ENCODE measurements at regions of chr6 and their contacts with region 1.

Region 1: DNA sequence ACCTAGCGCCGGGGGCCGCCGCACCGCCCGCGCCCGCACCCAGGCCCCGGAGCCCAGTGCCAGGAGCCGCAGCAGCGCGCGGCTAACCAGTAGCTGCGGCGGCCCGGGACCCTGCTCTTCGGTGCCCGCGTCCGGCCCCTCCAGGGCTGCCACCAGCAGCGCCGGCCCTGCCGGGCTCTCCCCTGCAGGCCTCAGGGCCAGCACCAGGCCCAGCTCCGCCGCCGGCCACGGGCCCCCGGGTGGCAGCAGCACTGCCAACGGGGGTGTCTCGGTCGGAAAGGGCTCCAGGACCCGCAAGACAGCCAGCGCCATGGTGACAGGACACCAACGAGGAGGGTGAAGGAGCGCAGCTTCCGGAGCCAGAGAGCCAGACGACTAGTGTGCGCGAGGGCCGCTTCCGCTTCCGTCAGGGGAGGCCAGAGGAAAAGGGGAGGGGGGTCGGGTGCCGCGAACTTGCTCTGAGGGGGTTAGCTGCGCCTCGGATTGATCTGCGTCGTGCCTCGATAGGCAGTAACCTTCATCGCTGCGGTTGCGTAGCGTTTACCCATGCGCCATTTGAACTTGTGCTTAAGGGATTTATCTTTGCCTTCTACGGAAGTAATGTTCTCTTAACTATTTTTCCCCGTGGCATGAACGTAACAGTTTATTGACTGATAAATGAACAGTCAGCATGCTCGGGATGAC is at the start of gene PEX6:
- DNase-seq: peak; percentile 94 to 98 (median 94)
- ATAC-seq: peak; percentile 91
- H3K4me3 ChIP-seq: peak within 1 kb of the TSS; percentile 95
- H3K27ac ChIP-seq: peak within 1 kb of the TSS; percentile 88
- H3K4me1 ChIP-seq: peaks cover 25 to 32% of the 10 kb centered on the region in 2 experiments; a peak in 4 of 5 replicates
- H3K27me3 ChIP-seq: no peaks in the 10 kb centered on the region
- CTCF ChIP-seq: peak in 1 of 3 experiments; percentile 3; a peak in 1 of 6 replicates
- EP300 ChIP-seq: peak; percentile 41; the same call in 1 of the 2 replicates
- POLR2A ChIP-seq: peak; percentile 97
- RAD21 ChIP-seq: no peak; a peak in 1 of 4 replicates
- polyA plus RNA-seq, gene PEX6: 0.17 to 0.77 TPM

Region 2: DNA sequence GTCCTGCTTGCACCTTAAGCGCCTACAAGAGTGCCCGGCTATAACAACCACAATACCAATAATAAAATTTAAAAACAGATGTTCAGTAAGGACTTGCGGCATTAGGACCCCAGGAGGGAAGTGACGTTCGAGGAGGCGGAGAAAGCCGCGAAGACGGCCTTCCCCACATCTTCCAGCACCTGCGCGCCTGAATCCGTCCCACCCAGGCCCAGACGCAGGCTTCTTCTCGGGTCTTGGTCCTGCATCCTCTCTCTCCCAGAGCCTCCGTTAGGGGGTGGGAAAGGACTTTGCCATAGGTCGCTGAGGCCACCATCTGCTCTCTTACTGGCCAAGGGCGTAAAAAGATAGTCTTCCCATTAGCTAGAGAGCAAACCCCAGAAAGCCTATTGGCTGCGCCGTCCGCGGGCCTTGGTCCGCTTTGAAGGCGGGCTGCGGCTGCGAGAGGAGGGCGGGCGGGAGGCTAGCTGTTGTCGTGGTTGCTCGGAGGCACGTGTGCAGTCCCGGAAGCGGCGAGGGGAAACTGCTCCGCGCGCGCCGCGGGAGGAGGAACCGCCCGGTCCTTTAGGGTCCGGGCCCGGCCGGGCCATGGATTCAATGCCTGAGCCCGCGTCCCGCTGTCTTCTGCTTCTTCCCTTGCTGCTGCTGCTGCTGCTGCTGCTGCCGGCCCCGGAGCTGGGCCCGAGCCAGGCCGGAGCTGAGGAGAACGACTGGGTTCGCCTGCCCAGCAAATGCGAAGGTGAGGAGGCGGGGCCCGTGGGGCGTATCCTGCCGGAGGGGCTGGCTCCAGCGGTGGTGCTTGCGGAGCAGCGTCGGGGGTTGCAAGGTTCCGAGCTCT is 49.8 kb before region 1 on chr6 and contains the start of gene CNPY3:
- CTCF ChIA-PET with region 1: no interaction called
- POLR2A ChIA-PET with region 1: interaction called, 13 read pairs
- in situ Hi-C with region 1: no loop called
- intact Hi-C with region 1: loop called (anchors 1 kb)
- DNase-seq: peak; percentile 96 to 99 (median 96)
- ATAC-seq: peak; percentile 95
- H3K4me3 ChIP-seq: peak within 1 kb of the TSS; percentile 76
- H3K27ac ChIP-seq: peak within 1 kb of the TSS; percentile 90
- H3K4me1 ChIP-seq: peaks cover 17 to 28% of the 10 kb centered on the region in 2 experiments; a peak in 4 of 5 replicates
- H3K27me3 ChIP-seq: no peaks in the 10 kb centered on the region
- CTCF ChIP-seq: peak in 2 of 3 experiments; percentile 15 to 36; a peak in 2 of 6 replicates
- EP300 ChIP-seq: peak; percentile 31; the same call in 1 of the 2 replicates
- POLR2A ChIP-seq: peak; percentile 88
- RAD21 ChIP-seq: peak; percentile 1 to 3; a peak in 1 of 4 replicates
- polyA plus RNA-seq, gene CNPY3: 2.4 to 3.9 TPM

Region 3: DNA sequence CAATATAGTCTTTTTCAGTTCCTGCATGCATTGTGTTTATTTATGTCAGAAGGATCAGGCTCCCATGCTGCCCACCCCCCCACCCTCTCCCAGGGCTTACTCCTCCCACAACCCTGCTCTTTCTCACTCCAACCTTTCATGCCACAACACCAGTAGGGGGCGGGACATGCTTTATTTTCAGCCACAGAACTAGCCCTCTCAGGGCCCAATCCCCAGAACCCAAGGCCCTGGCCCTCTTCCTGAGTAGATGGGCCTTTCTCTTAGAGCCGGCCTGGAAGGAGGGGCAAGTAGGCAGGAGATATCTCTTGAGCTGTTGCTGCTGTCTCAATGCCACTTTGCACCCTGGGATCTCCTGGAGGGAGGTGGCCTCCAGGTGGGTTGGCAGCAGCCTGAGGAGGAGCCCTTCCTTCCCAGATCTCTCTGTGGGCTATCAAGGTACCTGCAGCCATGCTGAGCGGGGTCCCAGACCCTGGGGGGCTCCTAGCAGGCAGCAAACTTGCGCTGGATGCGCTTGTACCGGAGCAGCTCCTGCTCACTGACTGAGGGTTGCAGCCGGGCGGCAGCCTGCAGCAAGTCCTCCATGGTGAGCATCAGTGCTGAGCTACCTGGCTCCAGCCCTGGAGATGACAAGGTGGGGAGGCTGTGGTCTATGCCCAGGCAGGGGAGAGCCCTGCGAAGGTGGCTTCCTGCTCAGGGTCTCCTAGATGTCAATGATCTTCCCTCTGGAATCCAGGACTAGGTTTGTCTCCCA is 15.0 kb before region 1 on chr6:
- CTCF ChIA-PET with region 1: no interaction called
- POLR2A ChIA-PET with region 1: interaction called, 22 read pairs
- in situ Hi-C with region 1: no loop called
- intact Hi-C with region 1: no loop called
- DNase-seq: peak; percentile 75 to 87 (median 81)
- ATAC-seq: peak; percentile 98
- H3K4me3 ChIP-seq: no peak overlapping the region
- H3K27ac ChIP-seq: no peak overlapping the region
- H3K4me1 ChIP-seq: peaks cover 0 to 14% of the 10 kb centered on the region in 2 experiments; a peak in 2 of 5 replicates
- H3K27me3 ChIP-seq: no peaks in the 10 kb centered on the region
- CTCF ChIP-seq: peak; percentile 64 to 85 (median 73)
- EP300 ChIP-seq: no peak
- POLR2A ChIP-seq: no peak
- RAD21 ChIP-seq: peak; percentile 51 to 80; a peak in 3 of 4 replicates

Region 4: GRCh38 chr6:42996513-42996912 is 17.5 kb after region 1 on chr6:
- CTCF ChIA-PET with region 1: no interaction called
- POLR2A ChIA-PET with region 1: interaction called, 11 read pairs
- in situ Hi-C with region 1: no loop called
- intact Hi-C with region 1: no loop called
- DNase-seq: no peak
- ATAC-seq: no peak
- H3K4me3 ChIP-seq: no peak overlapping the region
- H3K27ac ChIP-seq: no peak overlapping the region
- H3K4me1 ChIP-seq: 0 out of 5 replicates have a peak, but pooled peaks cover 0 to 4% of the 10 kb centered on the region in 2 experiments
- H3K27me3 ChIP-seq: no peaks in the 10 kb centered on the region
- CTCF ChIP-seq: 0 out of 6 replicates have a peak, but pooled peaks of 1 of the 3 experiments have one; percentile 3
- EP300 ChIP-seq: no peak
- POLR2A ChIP-seq: no peak
- RAD21 ChIP-seq: no peak